WTC11 (cell line): ENCODE measurements at regions of chr11 and their contacts with region 1.

Region 1: GRCh38 chr11:76207642-76208401 is 1.5 kb upstream of the WNT11 start:
- DNase-seq: peak; percentile 84
- ATAC-seq: peak; percentile 40
- H3K4me3 Mint-ChIP-seq: peak overlapping the region; percentile 67
- H3K27ac Mint-ChIP-seq: no peak overlapping the region
- H3K4me1 Mint-ChIP-seq: peaks cover 24% of the 10 kb centered on the region
- H3K27me3 Mint-ChIP-seq: peaks cover 96% of the 10 kb centered on the region
- CTCF ChIP-seq: peak; percentile 83

Region 2: DNA sequence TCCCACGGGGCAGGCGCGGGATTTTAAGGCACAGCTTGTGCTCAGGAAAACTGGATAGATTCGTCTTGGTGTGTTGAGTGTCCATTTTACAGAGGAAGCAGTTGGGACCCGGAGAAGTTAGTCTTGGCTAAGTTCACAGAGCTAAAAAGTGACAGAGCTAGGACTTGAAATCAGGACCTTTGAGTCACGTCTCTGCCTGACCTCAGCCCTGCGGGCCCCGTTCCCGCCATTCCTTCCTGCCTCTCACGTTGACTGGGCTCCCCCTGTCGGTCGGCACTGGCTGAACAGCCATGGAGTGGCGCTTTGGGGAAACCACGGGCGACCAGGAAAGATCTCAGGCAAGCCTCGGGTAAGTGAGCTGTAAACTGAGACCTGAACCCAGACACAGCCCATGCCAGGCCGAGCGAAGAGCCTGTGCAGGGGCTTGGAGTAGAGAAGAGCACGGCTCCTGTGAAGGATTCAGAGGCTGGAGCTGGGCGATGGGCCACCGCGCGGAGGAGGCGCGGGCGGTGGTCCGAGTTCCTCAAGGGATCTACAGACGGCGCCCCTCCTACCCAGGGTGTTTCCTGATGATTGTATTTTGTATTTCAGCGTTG is 55.6 kb before region 1 on chr11:
- CTCF ChIA-PET with region 1: interaction called, 62 read pairs
- POLR2A ChIA-PET with region 1: no interaction called
- DNase-seq: peak; percentile 90
- ATAC-seq: peak; percentile 91
- H3K4me3 Mint-ChIP-seq: peak overlapping the region; percentile 70
- H3K27ac Mint-ChIP-seq: no peak overlapping the region
- H3K4me1 Mint-ChIP-seq: peaks cover 13% of the 10 kb centered on the region
- H3K27me3 Mint-ChIP-seq: peaks cover 22% of the 10 kb centered on the region
- CTCF ChIP-seq: peak; percentile 92

Region 3: GRCh38 chr11:76235233-76236091 is 27.6 kb after region 1 on chr11:
- CTCF ChIA-PET with region 1: interaction called, 111 read pairs
- POLR2A ChIA-PET with region 1: interaction called, 5 read pairs
- DNase-seq: peak; percentile 94
- ATAC-seq: peak; percentile 79
- H3K4me3 Mint-ChIP-seq: peak overlapping the region; percentile 99
- H3K27ac Mint-ChIP-seq: peak overlapping the region; percentile 94
- H3K4me1 Mint-ChIP-seq: peaks cover 14% of the 10 kb centered on the region
- H3K27me3 Mint-ChIP-seq: peaks cover 6% of the 10 kb centered on the region
- CTCF ChIP-seq: no peak

Region 4: GRCh38 chr11:76277298-76278175 is 69.7 kb after region 1 on chr11:
- CTCF ChIA-PET with region 1: interaction called, 11 read pairs
- POLR2A ChIA-PET with region 1: no interaction called
- DNase-seq: no peak
- ATAC-seq: peak; percentile 39
- H3K4me3 Mint-ChIP-seq: no peak overlapping the region
- H3K27ac Mint-ChIP-seq: no peak overlapping the region
- H3K4me1 Mint-ChIP-seq: peaks cover 20% of the 10 kb centered on the region
- H3K27me3 Mint-ChIP-seq: no peaks in the 10 kb centered on the region; the same call in none of the 2 replicates
- CTCF ChIP-seq: no peak

Region 5: DNA sequence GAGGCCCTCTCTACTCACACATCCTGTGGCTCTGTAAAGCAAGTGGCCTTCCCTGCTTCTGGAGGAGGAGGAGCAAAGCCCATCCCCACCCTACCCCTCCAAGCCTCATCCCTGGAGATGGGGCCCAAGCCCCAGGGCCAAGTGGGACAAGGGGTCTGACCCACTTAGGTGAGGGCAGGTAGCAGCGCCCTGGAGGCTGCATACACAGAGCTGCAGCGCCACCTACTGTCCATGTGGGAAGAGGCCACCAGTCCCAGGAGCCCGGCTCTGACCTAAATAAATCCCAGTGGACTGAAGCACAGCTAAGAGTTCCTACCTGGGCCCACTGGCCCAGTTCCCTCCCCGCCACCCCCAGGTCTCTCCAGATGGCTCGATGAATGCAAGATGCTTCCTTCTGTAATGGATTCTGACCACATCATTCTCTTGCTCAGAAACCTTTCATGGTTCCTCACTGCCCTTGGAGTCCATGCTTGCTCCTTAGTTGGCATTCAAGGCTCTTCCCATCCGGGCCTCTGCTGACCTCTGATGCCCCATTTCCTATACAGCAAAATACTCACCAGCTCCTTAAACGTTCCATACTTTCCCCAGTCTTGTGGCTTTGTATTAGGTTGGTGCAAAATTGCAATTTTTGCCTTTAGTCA is 111.0 kb after region 1 on chr11:
- CTCF ChIA-PET with region 1: interaction called, 219 read pairs
- POLR2A ChIA-PET with region 1: no interaction called
- DNase-seq: peak; percentile 94
- ATAC-seq: peak; percentile 88
- H3K4me3 Mint-ChIP-seq: no peak overlapping the region
- H3K27ac Mint-ChIP-seq: no peak overlapping the region
- H3K4me1 Mint-ChIP-seq: peaks cover 24% of the 10 kb centered on the region
- H3K27me3 Mint-ChIP-seq: peaks cover 41% of the 10 kb centered on the region
- CTCF ChIP-seq: peak; percentile 93